B cell (primary cell): ENCODE measurements at regions of chr14 and their contacts with region 1.

Region 1: GRCh38 chr14:95265106-95266094 is 54.3 kb downstream of the CLMN start:
- DNase-seq: peak; percentile 82
- ATAC-seq: peak; percentile 94
- H3K4me3 ChIP-seq: peak overlapping the region in 1 of 5 experiments; percentile 19
- H3K4me3 Mint-ChIP-seq: peak overlapping the region; percentile 67
- H3K27ac ChIP-seq: peak overlapping the region; percentile 32 to 57
- H3K27ac Mint-ChIP-seq: peak overlapping the region; percentile 79
- H3K4me1 ChIP-seq: peaks cover 21 to 27% of the 10 kb centered on the region in 2 donors
- H3K4me1 Mint-ChIP-seq: peaks cover 44% of the 10 kb centered on the region
- H3K27me3 ChIP-seq: no peaks in the 10 kb centered on the region
- H3K27me3 Mint-ChIP-seq: no peaks in the 10 kb centered on the region
- CTCF ChIP-seq: no peak

Region 2: DNA sequence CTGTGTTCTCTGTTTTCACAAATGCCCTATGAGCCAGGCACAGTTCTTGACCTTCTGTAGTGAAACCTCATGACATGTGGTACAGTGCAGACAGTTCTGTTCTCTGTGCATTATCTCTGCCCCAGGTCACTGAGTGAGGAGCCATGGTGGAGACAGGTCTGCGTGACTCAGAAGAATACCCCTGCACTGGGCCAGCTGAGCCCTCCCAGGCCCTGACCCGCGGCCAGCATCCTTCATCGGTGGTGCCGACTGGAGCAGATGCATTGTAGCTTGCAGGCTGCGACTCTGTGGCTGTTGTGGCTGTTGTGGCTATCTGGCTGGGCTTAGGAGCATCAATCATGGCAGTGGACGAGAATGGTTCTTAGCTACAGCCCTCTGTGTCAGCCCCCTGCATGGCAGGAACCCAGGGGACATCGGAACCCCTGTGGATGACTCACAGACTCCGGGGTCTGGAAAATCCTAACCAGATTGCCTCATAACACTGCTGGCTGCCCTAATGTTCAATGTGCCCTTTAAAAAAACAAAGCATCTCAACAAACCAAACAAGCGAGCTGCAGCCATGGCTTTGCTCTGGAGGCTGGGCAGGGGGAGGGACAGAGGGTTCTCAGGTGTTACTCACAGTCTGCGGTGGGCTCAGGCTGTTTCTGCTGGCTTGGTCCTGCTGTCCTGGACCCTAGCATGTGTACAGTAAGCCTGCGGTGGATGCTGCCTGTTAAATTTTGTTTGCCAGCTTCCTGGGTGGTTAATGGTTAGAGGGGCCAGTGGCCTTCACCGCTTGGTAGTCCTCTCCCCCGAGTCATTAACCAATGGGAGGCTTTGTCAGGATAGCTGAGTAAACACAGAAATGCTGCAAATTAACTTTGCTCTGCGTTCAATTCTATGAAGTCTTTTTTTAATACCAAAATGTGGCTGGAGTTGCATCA is 942.5 kb before region 1 on chr14 and contains the start of gene SERPINA6:
- CTCF ChIA-PET with region 1: no interaction called
- POLR2A ChIA-PET with region 1: no interaction called
- intact Hi-C with region 1: no loop called
- DNase-seq: no peak
- ATAC-seq: no peak
- H3K4me3 ChIP-seq: no peak within 1 kb of the TSS
- H3K4me3 Mint-ChIP-seq: no peak within 1 kb of the TSS
- H3K27ac ChIP-seq: no peak within 1 kb of the TSS
- H3K27ac Mint-ChIP-seq: no peak within 1 kb of the TSS
- H3K4me1 ChIP-seq: no peaks in the 10 kb centered on the region
- H3K4me1 Mint-ChIP-seq: no peaks in the 10 kb centered on the region
- H3K27me3 ChIP-seq: no peaks in the 10 kb centered on the region
- H3K27me3 Mint-ChIP-seq: no peaks in the 10 kb centered on the region
- CTCF ChIP-seq: no peak
- total RNA-seq, gene SERPINA6: not detected in 2 replicates

Region 3: DNA sequence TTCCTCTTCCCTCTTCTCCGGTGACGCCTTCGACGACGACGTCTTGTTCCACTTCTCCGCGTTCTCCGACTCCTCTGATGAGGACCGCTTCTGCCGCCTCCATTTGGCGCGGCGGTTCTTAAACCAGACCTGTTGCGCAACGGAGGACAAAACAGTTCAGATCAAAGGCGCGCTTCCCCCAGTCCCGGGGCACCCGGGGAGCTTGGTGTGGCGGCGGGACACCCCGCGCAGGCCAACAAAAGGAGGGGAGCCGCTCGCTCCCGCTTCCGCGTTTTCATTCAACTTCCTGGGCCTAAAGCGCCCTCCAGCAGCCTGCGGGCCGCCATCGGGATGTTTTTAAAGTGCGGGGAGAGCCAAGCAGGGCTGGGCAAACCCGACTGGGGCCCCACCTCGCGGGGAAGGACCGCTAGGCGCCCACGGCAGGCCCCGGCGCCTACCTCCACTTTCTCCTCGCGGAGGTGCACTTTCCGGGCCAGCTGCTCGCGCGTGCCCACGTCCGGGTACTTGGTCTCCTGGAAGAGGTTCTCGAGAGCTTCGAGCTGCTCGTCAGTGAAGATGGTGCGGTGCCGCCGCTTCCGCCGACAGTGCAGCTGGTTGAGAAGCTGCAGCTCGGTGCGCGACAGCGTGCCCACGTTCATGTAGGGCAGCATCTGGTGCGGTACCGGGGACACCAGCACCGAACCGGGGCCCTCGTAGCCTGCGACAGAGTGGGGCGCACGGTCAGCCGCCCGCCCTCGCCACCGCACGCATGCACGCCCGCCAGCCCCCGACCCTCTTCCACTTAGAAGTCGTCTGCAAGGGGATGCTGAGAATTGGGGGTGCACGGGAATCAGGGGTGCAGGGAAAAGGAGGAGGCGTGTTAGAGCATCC is 496.6 kb before region 1 on chr14:
- CTCF ChIA-PET with region 1: no interaction called
- POLR2A ChIA-PET with region 1: no interaction called
- intact Hi-C with region 1: no loop called
- DNase-seq: peak; percentile 21
- ATAC-seq: no peak
- H3K4me3 ChIP-seq: peak overlapping the region in 3 of 5 experiments; percentile 12 to 39 (median 38)
- H3K4me3 Mint-ChIP-seq: peak overlapping the region; percentile 80
- H3K27ac ChIP-seq: no peak overlapping the region
- H3K27ac Mint-ChIP-seq: no peak overlapping the region
- H3K4me1 ChIP-seq: peaks cover 17 to 21% of the 10 kb centered on the region in 2 donors
- H3K4me1 Mint-ChIP-seq: peaks cover 18% of the 10 kb centered on the region
- H3K27me3 ChIP-seq: peaks cover 0 to 86% (median 38%) of the 10 kb centered on the region in 4 experiments
- H3K27me3 Mint-ChIP-seq: peaks cover 65% of the 10 kb centered on the region
- CTCF ChIP-seq: no peak

Region 4: DNA sequence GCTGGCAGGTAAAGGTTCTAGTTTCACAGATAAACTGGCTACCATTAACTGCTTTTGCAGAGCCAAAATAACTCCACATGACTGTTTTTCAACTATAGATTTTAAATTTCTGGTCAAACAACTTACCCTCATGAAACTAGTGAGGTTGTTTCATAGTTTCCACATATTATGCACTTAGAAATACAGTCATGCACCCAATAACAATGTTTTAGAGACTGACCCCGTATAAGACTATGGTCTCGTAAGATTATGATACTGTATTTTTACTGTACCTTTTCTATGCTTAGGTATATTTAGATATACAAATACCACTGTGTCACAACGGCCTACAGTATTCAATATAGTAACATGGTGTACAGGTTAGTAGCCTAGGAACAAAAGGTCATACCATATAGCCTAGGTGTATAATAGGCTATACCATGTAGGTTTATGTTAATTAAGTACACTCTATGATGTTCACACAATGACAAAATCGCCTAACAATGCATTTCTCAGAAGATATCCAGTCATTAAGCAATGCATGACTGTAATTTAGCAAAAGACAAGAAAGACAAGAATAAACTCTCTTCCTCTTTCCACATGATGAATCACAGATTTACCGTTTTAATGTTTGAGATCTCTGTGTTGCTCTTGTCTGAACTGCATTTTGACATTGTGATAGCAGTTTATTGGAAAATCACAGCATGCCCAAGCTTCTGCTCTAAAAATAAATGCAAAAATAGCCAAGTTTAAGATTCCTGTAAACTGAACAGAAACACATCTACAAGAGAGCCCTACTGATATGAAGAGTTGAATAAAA is 125.1 kb before region 1 on chr14:
- CTCF ChIA-PET with region 1: no interaction called
- POLR2A ChIA-PET with region 1: no interaction called
- intact Hi-C with region 1: loop called (anchors 5 kb)
- DNase-seq: peak; percentile 22
- ATAC-seq: peak; percentile 61
- H3K4me3 ChIP-seq: peak overlapping the region in 1 of 5 experiments; percentile 22
- H3K4me3 Mint-ChIP-seq: peak overlapping the region; percentile 44
- H3K27ac ChIP-seq: peak overlapping the region in 1 of 2 donors; percentile 82
- H3K27ac Mint-ChIP-seq: peak overlapping the region; percentile 68
- H3K4me1 ChIP-seq: peaks cover 26 to 40% of the 10 kb centered on the region in 2 donors
- H3K4me1 Mint-ChIP-seq: peaks cover 74% of the 10 kb centered on the region
- H3K27me3 ChIP-seq: no peaks in the 10 kb centered on the region
- H3K27me3 Mint-ChIP-seq: no peaks in the 10 kb centered on the region
- CTCF ChIP-seq: no peak

Region 5: GRCh38 chr14:95300002-95300696 is 34.7 kb after region 1 on chr14:
- CTCF ChIA-PET with region 1: interaction called, 3 read pairs
- POLR2A ChIA-PET with region 1: no interaction called
- intact Hi-C with region 1: loop called (anchors 5 kb)
- DNase-seq: no peak
- ATAC-seq: peak; percentile 81
- H3K4me3 ChIP-seq: no peak overlapping the region
- H3K4me3 Mint-ChIP-seq: peak overlapping the region; percentile 17
- H3K27ac ChIP-seq: no peak overlapping the region
- H3K27ac Mint-ChIP-seq: no peak overlapping the region
- H3K4me1 ChIP-seq: peaks cover 36 to 51% of the 10 kb centered on the region in 2 donors
- H3K4me1 Mint-ChIP-seq: peaks cover 66% of the 10 kb centered on the region
- H3K27me3 ChIP-seq: peaks cover 0 to 4% (median 0%) of the 10 kb centered on the region in 4 experiments
- H3K27me3 Mint-ChIP-seq: no peaks in the 10 kb centered on the region
- CTCF ChIP-seq: no peak

Region 6: DNA sequence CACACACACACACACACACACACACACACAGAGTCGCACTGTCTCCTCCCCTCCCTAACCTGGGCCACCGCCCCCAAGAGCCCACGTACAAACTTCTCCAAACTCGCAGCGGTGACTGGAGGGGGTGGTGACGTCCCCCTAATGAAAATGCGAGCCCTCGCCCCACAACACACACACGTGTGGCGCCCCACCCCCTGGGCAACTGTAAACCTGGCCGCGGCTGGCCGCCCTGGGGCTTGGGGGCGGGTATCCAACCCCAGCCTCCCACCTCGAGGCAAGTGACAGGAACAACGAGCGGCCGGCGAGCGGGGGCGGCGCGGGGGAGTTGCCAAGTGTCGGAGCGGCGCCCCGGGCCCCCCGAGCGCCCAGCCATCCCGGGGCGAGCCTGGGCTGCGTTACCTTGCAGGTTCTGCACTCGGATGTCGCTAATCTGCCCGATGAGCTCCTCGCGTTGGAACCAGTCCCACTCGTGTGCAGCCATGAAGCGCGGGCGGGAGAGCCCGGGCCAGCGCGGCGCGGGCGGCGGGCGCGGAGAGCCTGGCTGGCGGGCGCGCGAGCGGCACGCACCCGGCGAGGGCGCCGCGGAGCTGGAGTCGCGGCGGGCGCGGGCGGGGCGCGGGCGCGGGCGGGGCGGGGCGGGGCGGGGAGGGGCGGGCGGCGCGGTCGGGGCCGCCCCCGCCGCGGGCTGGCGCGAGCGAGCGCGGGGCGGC is 54.1 kb after region 1 on chr14 and contains the start of gene CLMN:
- CTCF ChIA-PET with region 1: no interaction called
- POLR2A ChIA-PET with region 1: interaction called, 4 read pairs
- intact Hi-C with region 1: loop called (anchors 1 kb)
- DNase-seq: peak; percentile 86
- ATAC-seq: peak; percentile 83
- H3K4me3 ChIP-seq: peak within 1 kb of the TSS; percentile 9 to 74 (median 71)
- H3K4me3 Mint-ChIP-seq: peak within 1 kb of the TSS; percentile 91
- H3K27ac ChIP-seq: peak within 1 kb of the TSS; percentile 47 to 66
- H3K27ac Mint-ChIP-seq: peak within 1 kb of the TSS; percentile 93
- H3K4me1 ChIP-seq: peaks cover 13 to 25% of the 10 kb centered on the region in 2 donors
- H3K4me1 Mint-ChIP-seq: peaks cover 30% of the 10 kb centered on the region
- H3K27me3 ChIP-seq: no peaks in the 10 kb centered on the region
- H3K27me3 Mint-ChIP-seq: no peaks in the 10 kb centered on the region
- CTCF ChIP-seq: no peak
- total RNA-seq, gene CLMN: 51.1 and 51.5 TPM in 2 replicates

Region 7: DNA sequence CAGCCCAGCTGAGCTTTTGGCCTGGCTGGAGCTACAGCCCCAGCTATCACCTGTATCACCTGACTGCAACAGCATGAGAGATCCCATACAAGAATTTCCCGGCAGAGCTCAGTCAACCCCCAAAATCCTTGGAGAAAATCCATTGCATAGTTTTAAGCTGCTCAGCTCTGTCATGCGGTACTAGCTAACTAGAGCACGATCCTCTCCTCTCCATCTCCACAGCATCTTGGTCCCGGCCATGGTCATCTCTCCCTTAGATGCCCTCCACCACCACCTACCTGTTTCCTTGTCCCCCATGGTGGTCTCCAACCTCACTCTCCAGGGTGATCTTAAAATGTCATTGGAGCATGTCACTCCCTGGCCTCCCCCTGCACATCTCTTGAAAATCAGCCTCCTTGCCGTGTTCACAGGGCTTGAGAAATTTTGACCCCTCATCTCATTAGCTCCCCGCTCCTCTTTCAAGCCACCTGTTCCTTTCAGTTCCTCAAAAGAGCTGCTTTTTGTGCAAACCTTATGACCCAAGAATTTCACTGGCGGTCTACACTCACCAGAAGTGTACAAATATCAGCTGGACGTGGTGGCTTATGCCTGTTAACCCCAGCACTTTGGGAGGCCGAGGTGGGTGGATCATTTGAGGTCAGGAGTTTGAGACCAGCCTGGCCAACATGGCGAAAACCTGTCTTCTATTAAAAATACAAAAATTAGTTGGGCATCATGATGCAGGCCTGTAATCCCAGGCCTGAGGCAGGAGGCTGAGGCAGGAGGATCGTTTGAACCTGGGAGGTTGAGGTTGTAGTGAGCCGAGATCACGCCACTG is 62.4 kb after region 1 on chr14:
- CTCF ChIA-PET with region 1: interaction called, 4 read pairs
- POLR2A ChIA-PET with region 1: interaction called, 3 read pairs
- intact Hi-C with region 1: loop called (anchors 1 kb)
- DNase-seq: peak; percentile 88
- ATAC-seq: peak; percentile 86
- H3K4me3 ChIP-seq: peak overlapping the region in 4 of 5 experiments; percentile 20 to 42 (median 28)
- H3K4me3 Mint-ChIP-seq: peak overlapping the region; percentile 84
- H3K27ac ChIP-seq: peak overlapping the region; percentile 71 to 96
- H3K27ac Mint-ChIP-seq: peak overlapping the region; percentile 92
- H3K4me1 ChIP-seq: peaks cover 42 to 46% of the 10 kb centered on the region in 2 donors
- H3K4me1 Mint-ChIP-seq: peaks cover 54% of the 10 kb centered on the region
- H3K27me3 ChIP-seq: no peaks in the 10 kb centered on the region
- H3K27me3 Mint-ChIP-seq: no peaks in the 10 kb centered on the region
- CTCF ChIP-seq: no peak